HCT116 (cell line): ENCODE measurements at regions of chr9 and their contacts with region 1.

Region 1: DNA sequence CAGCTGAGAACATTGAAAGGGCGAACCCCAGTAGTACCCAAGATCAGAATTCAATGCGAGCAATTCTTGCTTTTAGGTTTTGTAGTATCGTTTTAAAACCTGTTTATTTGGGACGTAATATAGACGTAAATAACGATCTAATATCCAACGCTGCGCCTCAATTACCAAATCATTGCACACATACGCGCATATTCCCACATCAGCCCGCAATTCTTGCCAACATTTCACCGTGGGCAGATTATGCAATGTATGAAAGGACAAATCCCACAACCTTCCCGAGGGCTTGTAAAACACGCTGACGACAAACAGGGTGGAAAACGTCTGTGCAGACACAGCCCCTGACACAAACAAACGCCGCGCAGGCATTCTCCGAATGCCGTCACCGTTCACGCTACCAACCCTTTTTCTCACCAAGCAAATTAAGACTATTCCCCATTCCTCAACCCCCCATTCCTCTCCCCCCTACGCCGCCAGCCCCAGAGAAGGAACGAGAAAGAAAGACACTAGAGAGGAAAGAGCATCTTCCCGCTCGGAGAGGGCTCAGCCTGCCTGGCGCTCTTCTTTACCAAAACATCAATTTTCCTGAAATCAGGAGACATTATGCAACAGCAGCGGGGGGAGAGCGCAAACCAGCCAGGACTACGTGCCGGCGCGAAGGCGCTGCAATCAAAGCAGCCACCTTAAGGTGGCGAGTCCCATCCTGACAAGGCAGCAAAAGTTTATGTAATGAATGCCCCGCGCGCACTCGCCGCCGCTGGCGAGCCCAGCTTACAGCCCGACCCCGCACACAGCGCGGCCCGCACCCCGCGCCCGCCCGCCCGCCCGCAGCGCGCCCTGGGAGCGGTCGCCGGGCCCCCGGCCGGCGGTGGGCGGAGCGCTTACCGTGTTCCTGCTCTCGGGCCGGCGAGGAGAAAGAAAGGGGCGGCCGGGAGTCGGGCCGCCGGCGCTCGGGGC is 597 bp downstream of the NFIL3 start:
- DNase-seq: no peak
- ATAC-seq: peak; percentile 46
- H3K4me3 ChIP-seq: peak overlapping the region; percentile 90 to 92
- H3K27ac ChIP-seq: peak overlapping the region; percentile 63
- H3K4me1 ChIP-seq: peaks cover 50 to 70% of the 10 kb centered on the region in 2 experiments
- H3K27me3 ChIP-seq: no peaks in the 10 kb centered on the region
- CTCF ChIP-seq: 0 out of 6 replicates have a peak, but pooled peaks of 1 of the 3 experiments have one; percentile 7
- POLR2A ChIP-seq: no peak
- RAD21 ChIP-seq: no peak

Region 2: DNA sequence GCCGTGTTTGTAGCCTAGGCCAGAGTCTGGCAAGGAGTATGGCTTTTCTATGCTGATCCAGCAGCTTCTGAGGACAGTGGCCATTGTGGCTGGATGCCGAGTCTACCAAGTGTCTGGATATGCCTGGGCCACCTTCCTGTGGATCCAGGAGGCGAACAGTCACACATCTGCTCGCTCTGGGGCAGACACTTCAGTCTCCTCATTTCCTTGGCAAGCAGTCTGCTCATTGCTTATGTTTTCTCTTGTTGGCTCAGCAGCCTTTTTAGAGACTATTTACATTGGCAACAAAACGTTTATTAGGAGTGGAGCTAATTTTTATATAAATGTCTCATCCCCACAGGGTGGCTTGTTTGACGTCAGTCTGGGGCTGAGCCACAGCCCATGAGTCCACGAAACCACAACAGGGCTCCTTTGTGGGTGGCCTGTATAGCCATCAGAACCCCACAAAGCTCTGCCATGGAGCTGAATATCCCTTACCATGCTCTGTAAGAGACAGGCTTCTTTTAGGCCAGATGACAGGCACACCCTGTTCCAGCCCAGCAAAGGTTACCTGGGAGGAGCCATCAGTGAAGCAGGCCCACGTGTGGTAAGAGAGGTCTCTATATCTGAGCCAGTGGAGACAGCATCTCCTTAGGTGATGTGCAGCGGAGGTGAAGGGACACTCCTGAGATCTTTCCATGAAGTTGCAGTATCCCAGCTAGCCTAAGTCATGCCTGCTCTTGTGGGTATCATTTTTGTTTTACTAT is 1002.1 kb before region 1 on chr9:
- CTCF ChIA-PET with region 1: no interaction called
- POLR2A ChIA-PET with region 1: no interaction called
- RAD21 ChIA-PET with region 1: no interaction called
- intact Hi-C with region 1: no loop called
- DNase-seq: no peak
- ATAC-seq: no peak
- H3K4me3 ChIP-seq: no peak overlapping the region
- H3K27ac ChIP-seq: no peak overlapping the region
- H3K4me1 ChIP-seq: peaks cover 3 to 5% of the 10 kb centered on the region in 2 experiments; a peak in 2 of 4 replicates
- H3K27me3 ChIP-seq: peaks cover 15% of the 10 kb centered on the region
- CTCF ChIP-seq: no peak
- POLR2A ChIP-seq: no peak
- RAD21 ChIP-seq: no peak

Region 3: GRCh38 chr9:90898228-90898627 is 524.8 kb before region 1 on chr9:
- CTCF ChIA-PET with region 1: no interaction called
- POLR2A ChIA-PET with region 1: no interaction called
- RAD21 ChIA-PET with region 1: no interaction called
- intact Hi-C with region 1: no loop called
- DNase-seq: no peak
- ATAC-seq: peak; percentile 56
- H3K4me3 ChIP-seq: no peak overlapping the region
- H3K27ac ChIP-seq: no peak overlapping the region
- H3K4me1 ChIP-seq: no peaks in the 10 kb centered on the region
- H3K27me3 ChIP-seq: no peaks in the 10 kb centered on the region
- CTCF ChIP-seq: peak in 2 of 3 experiments; percentile 34 to 35; a peak in 2 of 6 replicates
- POLR2A ChIP-seq: no peak
- RAD21 ChIP-seq: peak; percentile 21; the same call in 1 of the 2 replicates

Region 4: DNA sequence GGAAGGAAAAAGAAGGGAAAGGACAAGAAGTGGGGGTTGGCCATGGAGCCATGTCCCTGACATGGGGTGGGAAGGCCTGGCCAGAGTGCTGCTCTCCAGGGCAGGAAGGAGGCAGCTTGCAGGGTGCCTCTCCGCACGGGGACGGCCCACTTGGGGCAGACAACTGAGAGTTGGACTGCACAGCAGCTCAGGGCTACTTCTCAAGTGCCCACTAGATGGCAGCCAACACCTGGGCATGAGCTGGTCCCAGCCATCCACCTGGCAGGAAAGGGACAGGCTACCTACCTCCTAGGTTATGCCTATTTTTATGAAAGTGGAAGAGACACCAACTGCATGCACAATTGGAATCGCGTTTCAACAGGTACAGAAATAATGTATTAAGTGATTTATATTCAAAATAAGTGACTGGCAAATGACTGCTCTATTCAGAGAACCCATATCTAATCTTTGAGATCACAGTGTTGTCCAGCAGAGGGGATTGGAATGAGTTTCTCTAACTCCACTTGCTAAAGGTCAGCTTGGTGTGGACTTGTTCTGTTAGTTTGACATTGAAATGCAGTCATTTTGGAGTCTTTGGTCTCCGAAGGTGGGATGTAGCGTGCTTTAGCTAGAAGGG is 508.1 kb before region 1 on chr9:
- CTCF ChIA-PET with region 1: interaction called, 62 read pairs
- POLR2A ChIA-PET with region 1: no interaction called
- RAD21 ChIA-PET with region 1: interaction called, 9 to 20 read pairs
- intact Hi-C with region 1: loop called (anchors 1 kb)
- DNase-seq: peak; percentile 66
- ATAC-seq: peak; percentile 98
- H3K4me3 ChIP-seq: no peak overlapping the region
- H3K27ac ChIP-seq: no peak overlapping the region
- H3K4me1 ChIP-seq: no peaks in the 10 kb centered on the region
- H3K27me3 ChIP-seq: no peaks in the 10 kb centered on the region
- CTCF ChIP-seq: peak; percentile 87 to 91 (median 88)
- POLR2A ChIP-seq: no peak
- RAD21 ChIP-seq: peak; percentile 97

Region 5: DNA sequence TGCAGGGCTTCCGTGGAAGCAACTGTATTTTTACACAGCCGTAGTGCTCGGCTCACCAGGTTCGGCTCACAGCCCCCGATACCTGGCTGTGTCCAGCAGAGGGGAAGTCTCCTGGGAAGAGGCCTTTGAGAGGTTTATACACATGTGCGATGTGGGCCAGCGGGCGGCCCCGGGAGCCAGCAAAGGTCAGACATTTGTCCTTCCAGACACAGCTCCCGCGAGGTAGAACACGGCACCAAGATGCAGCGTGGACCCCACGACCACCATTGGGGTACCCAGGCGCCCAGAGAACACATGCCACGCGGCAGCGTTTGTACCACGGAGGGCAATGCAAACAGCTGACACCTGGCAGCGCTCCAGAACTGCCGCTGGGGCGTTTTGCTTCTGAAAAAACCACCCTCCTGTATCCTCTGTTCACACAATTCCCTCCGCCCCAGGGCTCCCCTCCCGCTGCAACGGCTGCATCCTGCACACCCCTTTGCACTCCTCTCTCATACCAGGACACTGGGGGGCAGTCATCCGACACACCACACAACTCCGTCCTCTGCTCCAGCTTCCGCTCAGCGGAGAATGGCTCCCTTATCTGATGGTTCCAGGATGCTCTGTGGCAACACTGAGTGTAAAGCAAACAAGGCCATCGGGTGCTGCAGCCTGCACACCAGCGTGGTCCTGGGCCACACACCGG is 386.1 kb before region 1 on chr9:
- CTCF ChIA-PET with region 1: interaction called, 12 read pairs
- POLR2A ChIA-PET with region 1: no interaction called
- RAD21 ChIA-PET with region 1: interaction called, 5 to 6 read pairs
- intact Hi-C with region 1: loop called (anchors 1 kb)
- DNase-seq: peak; percentile 47
- ATAC-seq: peak; percentile 90
- H3K4me3 ChIP-seq: no peak overlapping the region
- H3K27ac ChIP-seq: peak overlapping the region; percentile 73
- H3K4me1 ChIP-seq: peaks cover 21 to 29% of the 10 kb centered on the region in 2 experiments
- H3K27me3 ChIP-seq: no peaks in the 10 kb centered on the region
- CTCF ChIP-seq: peak; percentile 56 to 61 (median 60); a peak in 5 of 6 replicates
- POLR2A ChIP-seq: no peak
- RAD21 ChIP-seq: peak; percentile 94

Region 6: GRCh38 chr9:91193658-91194391 is 229.2 kb before region 1 on chr9:
- CTCF ChIA-PET with region 1: interaction called, 3 read pairs
- POLR2A ChIA-PET with region 1: no interaction called
- RAD21 ChIA-PET with region 1: interaction called, 3 to 5 read pairs
- intact Hi-C with region 1: loop called (anchors 5 kb)
- DNase-seq: peak; percentile 64
- ATAC-seq: peak; percentile 56
- H3K4me3 ChIP-seq: peak overlapping the region; percentile 42 to 58
- H3K27ac ChIP-seq: peak overlapping the region; percentile 100
- H3K4me1 ChIP-seq: peaks cover 62 to 83% of the 10 kb centered on the region in 2 experiments
- H3K27me3 ChIP-seq: no peaks in the 10 kb centered on the region
- CTCF ChIP-seq: no peak
- POLR2A ChIP-seq: no peak
- RAD21 ChIP-seq: no peak

Region 7: DNA sequence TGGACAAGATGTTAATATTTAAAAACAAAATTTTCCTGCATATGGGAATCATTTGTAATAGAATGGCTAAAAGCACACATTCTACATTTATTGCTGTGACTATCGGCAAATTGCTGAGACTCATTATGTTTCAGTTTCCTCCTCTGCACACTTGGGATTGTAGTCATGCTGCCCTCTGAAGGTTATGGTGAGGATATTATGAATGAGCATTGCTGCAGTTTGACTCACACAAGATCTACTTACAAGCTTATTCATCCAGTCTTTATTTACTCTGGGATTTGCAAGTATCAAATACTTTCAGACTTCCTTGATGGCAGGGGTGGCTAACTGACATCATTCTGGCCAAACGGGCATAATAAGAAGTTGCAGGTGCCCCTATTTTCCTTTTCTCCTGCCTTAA is 10.1 kb after region 1 on chr9:
- CTCF ChIA-PET with region 1: interaction called, 10 read pairs
- POLR2A ChIA-PET with region 1: no interaction called
- RAD21 ChIA-PET with region 1: interaction called in 1 of 2 experiments, 3 read pairs
- intact Hi-C with region 1: no loop called
- DNase-seq: peak; percentile 78
- ATAC-seq: peak; percentile 93
- H3K4me3 ChIP-seq: peak overlapping the region in 1 of 2 experiments; percentile 8; a peak in 1 of 4 replicates
- H3K27ac ChIP-seq: no peak overlapping the region
- H3K4me1 ChIP-seq: peaks cover 6 to 16% of the 10 kb centered on the region in 2 experiments
- H3K27me3 ChIP-seq: no peaks in the 10 kb centered on the region
- CTCF ChIP-seq: peak; percentile 38 to 55 (median 50); a peak in 4 of 6 replicates
- POLR2A ChIP-seq: no peak
- RAD21 ChIP-seq: peak; percentile 87